CD4-positive, alpha-beta T cell (primary cell): ENCODE measurements at regions of chr16 and their contacts with region 1.

Region 1: GRCh38 chr16:50326949-50327402 is 41.8 kb downstream of the BRD7 start:
- DNase-seq: peak; percentile 39 to 93 (median 62)
- ATAC-seq: peak; percentile 92
- H3K4me3 ChIP-seq: no peak overlapping the region
- H3K4me3 Mint-ChIP-seq: no peak overlapping the region
- H3K27ac ChIP-seq: peak overlapping the region in 1 of 2 donors; percentile 20
- H3K27ac Mint-ChIP-seq: peak overlapping the region; percentile 84
- H3K4me1 ChIP-seq: peaks cover 38% of the 10 kb centered on the region
- H3K4me1 Mint-ChIP-seq: peaks cover 64% of the 10 kb centered on the region
- H3K27me3 ChIP-seq: no peaks in the 10 kb centered on the region
- H3K27me3 Mint-ChIP-seq: no peaks in the 10 kb centered on the region
- CTCF ChIP-seq: peak; percentile 83

Region 2: DNA sequence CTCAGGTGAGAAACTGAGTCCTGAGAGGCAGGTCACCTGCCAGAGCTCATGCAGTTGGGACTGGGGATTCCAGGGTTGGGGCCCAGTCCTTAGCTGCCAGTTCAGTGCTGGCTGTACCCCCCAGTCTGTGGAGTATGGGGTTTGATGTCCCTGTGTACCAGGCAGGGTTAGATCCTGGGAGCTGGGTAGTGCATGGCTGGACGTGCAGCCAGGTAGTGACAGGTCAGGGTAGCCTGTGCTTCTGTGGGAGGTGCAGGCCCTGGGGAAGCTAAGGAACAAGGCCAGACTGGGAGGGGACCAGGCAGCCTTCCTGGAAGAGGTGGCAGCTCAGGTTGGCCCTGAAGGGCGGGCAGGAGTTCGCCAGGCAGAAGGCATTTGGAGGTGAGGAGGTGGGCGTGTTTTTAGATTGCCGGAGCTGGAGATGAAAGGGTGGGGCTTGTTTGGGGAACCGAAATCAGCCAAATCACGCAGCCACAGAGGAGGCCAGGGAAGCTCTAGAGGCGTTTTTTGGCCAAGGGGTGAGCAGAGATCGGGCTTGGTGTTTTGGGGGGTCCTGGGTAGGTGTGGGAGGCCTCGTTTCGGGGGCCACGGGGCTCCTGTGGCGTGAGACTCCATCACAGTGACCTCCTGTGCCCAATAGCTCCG is 53.2 kb before region 1 on chr16:
- CTCF ChIA-PET with region 1: interaction called, 12 read pairs
- POLR2A ChIA-PET with region 1: interaction called, 22 read pairs
- intact Hi-C with region 1: no loop called
- DNase-seq: peak in 12 of 14 experiments; percentile 23 to 72 (median 34)
- ATAC-seq: peak; percentile 51
- H3K4me3 ChIP-seq: peak overlapping the region; percentile 73
- H3K4me3 Mint-ChIP-seq: peak overlapping the region; percentile 95
- H3K27ac ChIP-seq: peak overlapping the region; percentile 91 to 93
- H3K27ac Mint-ChIP-seq: peak overlapping the region; percentile 100
- H3K4me1 ChIP-seq: peaks cover 97% of the 10 kb centered on the region
- H3K4me1 Mint-ChIP-seq: peaks cover 99% of the 10 kb centered on the region
- H3K27me3 ChIP-seq: no peaks in the 10 kb centered on the region
- H3K27me3 Mint-ChIP-seq: no peaks in the 10 kb centered on the region
- CTCF ChIP-seq: no peak

Region 3: GRCh38 chr16:50354629-50355456 is 27.9 kb after region 1 on chr16:
- CTCF ChIA-PET with region 1: interaction called, 91 read pairs
- POLR2A ChIA-PET with region 1: interaction called, 90 read pairs
- intact Hi-C with region 1: loop called (anchors 1 kb)
- DNase-seq: peak in 3 of 14 experiments; percentile 49 to 51 (median 50)
- ATAC-seq: peak; percentile 55
- H3K4me3 ChIP-seq: no peak overlapping the region
- H3K4me3 Mint-ChIP-seq: no peak overlapping the region
- H3K27ac ChIP-seq: no peak overlapping the region
- H3K27ac Mint-ChIP-seq: peak overlapping the region; percentile 80
- H3K4me1 ChIP-seq: peaks cover 3% of the 10 kb centered on the region
- H3K4me1 Mint-ChIP-seq: peaks cover 52% of the 10 kb centered on the region
- H3K27me3 ChIP-seq: no peaks in the 10 kb centered on the region
- H3K27me3 Mint-ChIP-seq: no peaks in the 10 kb centered on the region
- CTCF ChIP-seq: peak; percentile 95

Region 4: DNA sequence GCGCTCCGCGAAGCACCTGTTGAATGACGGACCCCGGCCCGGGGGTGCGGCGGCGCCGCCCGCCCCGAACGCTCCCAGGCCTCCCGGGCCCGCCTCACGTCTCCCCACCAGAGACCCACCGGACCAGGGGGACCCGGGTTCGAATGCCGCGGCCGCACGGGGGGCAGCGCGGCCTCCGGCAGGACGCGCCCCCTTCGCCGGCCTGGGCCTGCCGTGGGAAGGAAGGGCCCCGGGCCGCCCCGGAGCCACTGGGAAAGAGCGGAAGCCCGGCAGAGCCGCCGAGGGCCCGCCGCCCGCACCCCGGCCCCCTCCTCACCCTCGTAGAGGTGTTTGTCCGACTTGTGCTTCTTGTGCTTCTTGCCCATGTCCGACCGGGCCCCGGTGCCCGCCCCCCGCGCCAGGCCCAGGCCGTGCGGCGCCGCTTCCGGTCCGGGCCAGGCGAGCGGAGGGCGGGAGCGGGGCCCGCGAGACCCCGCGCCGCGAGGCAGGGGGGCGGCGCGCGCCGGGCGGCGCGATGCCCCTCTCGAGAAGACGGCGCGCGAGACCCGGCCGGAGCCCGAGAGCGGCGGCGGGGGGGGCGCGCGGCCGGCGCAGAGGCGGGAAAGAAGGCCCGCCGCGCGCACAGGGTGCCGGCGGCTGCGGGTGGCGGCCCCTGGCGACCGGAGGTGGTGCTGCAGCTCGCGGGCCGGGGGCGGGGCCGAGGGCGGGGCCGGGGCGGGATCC is 41.6 kb after region 1 on chr16 and contains the start of gene BRD7:
- CTCF ChIA-PET with region 1: interaction called, 14 read pairs
- POLR2A ChIA-PET with region 1: interaction called, 7 read pairs
- intact Hi-C with region 1: no loop called
- DNase-seq: peak; percentile 30 to 88 (median 70)
- ATAC-seq: peak; percentile 83
- H3K4me3 ChIP-seq: peak within 1 kb of the TSS; percentile 62
- H3K4me3 Mint-ChIP-seq: peak within 1 kb of the TSS; percentile 94
- H3K27ac ChIP-seq: peak within 1 kb of the TSS; percentile 15 to 52
- H3K27ac Mint-ChIP-seq: peak within 1 kb of the TSS; percentile 91
- H3K4me1 ChIP-seq: peaks cover 28% of the 10 kb centered on the region
- H3K4me1 Mint-ChIP-seq: peaks cover 58% of the 10 kb centered on the region
- H3K27me3 ChIP-seq: no peaks in the 10 kb centered on the region
- H3K27me3 Mint-ChIP-seq: no peaks in the 10 kb centered on the region
- CTCF ChIP-seq: no peak
- total RNA-seq, gene BRD7: 95.4 to 103 TPM

Region 5: DNA sequence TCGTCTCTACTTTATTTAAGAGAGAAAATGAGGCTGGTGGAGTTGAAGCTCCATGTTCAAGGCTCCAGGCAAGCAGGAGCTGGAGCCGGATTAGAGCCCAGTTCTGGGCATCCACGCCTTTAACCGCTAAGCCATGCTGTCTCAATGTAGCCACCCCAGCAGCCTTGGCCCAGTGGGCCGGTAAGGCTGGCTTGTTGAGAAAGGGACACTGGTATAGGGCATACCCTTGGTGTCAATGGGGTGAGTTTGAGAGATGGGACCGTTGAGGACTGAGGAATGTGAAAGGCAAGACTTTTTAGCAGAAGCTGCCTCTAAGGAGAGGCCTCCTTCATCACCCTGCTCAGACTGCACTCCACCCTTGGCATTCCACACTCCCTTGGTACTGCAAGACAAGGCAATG is 562.3 kb after region 1 on chr16:
- CTCF ChIA-PET with region 1: no interaction called
- POLR2A ChIA-PET with region 1: no interaction called
- intact Hi-C with region 1: no loop called
- DNase-seq: no peak
- ATAC-seq: no peak
- H3K4me3 ChIP-seq: no peak overlapping the region
- H3K4me3 Mint-ChIP-seq: no peak overlapping the region
- H3K27ac ChIP-seq: no peak overlapping the region
- H3K27ac Mint-ChIP-seq: no peak overlapping the region
- H3K4me1 ChIP-seq: no peaks in the 10 kb centered on the region
- H3K4me1 Mint-ChIP-seq: no peaks in the 10 kb centered on the region
- H3K27me3 ChIP-seq: peaks cover 0 to 12% of the 10 kb centered on the region in 2 experiments
- H3K27me3 Mint-ChIP-seq: peaks cover 71% of the 10 kb centered on the region
- CTCF ChIP-seq: no peak